ENCODE measurements at regions of chr1 and their contacts with region 1.

Region 1: GRCh38 chr1:152654110-152654509 is 9.1 kb upstream of the LCE2D start:
- DNase-seq: peak; percentile 49
- H3K4me3 ChIP-seq: no peak overlapping the region
- H3K27ac ChIP-seq: no peak overlapping the region
- H3K4me1 ChIP-seq: no peaks in the 10 kb centered on the region
- H3K27me3 ChIP-seq: no peaks in the 10 kb centered on the region
- CTCF ChIP-seq: peak; percentile 81
- EP300 ChIP-seq: no peak; a peak in 1 of 4 replicates
- RAD21 ChIP-seq: peak; percentile 61

Region 2: DNA sequence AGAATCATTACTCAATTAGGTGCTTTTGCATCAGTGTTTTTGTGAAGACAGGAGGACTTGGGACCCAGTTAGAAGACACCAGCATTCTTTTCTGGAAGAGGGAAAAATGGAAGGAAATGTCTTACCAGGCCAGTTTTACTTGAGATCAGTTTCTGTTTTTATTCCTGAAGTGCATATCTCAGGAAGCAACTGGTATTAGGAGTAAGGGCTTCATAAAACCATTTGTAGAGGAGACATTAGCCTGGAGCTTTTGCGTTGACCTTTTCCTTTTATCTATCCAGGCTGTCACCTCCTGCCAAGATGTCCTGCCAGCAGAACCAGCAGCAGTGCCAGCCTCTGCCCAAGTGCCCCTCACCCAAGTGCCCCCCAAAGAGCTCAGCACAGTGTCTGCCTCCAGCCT is 40.6 kb before region 1 on chr1 and contains the start of gene LCE3B:
- CTCF ChIA-PET with region 1: no interaction called
- POLR2A ChIA-PET with region 1: no interaction called
- DNase-seq: no peak
- H3K4me3 ChIP-seq: no peak within 1 kb of the TSS
- H3K27ac ChIP-seq: no peak within 1 kb of the TSS
- H3K4me1 ChIP-seq: no peaks in the 10 kb centered on the region
- H3K27me3 ChIP-seq: no peaks in the 10 kb centered on the region
- CTCF ChIP-seq: no peak
- EP300 ChIP-seq: no peak
- RAD21 ChIP-seq: no peak
- polyA plus RNA-seq, gene LCE3B: not detected in 2 replicates

Region 3: DNA sequence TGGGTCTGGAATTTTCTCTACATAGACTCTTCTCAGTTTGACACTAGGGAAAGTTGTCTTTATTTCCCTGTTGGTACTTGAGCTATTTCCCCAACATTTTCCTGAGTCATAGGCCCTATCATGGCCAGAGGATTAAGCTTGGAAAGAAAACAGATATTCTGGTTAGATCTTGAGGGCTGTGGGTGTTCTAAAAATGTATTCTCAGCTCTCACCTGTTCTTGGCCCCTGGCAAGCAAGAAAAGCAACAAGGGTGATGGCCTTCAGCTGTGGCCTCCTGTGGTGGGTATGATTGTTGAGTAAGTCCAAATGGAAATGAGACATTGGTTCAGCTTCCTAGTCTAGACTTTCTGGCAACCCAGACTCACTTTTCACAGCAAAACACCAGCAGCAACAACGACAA is 13.8 kb before region 1 on chr1:
- CTCF ChIA-PET with region 1: interaction called, 37 read pairs
- POLR2A ChIA-PET with region 1: no interaction called
- DNase-seq: no peak
- H3K4me3 ChIP-seq: no peak overlapping the region
- H3K27ac ChIP-seq: no peak overlapping the region
- H3K4me1 ChIP-seq: no peaks in the 10 kb centered on the region
- H3K27me3 ChIP-seq: no peaks in the 10 kb centered on the region
- CTCF ChIP-seq: no peak
- EP300 ChIP-seq: no peak
- RAD21 ChIP-seq: no peak

Region 4: GRCh38 chr1:152878042-152878441 is 223.9 kb after region 1 on chr1 and contains the start of gene SMCP:
- CTCF ChIA-PET with region 1: no interaction called
- POLR2A ChIA-PET with region 1: no interaction called
- DNase-seq: no peak
- H3K4me3 ChIP-seq: no peak within 1 kb of the TSS
- H3K27ac ChIP-seq: no peak within 1 kb of the TSS
- H3K4me1 ChIP-seq: no peaks in the 10 kb centered on the region; a peak in 1 of 4 replicates
- H3K27me3 ChIP-seq: no peaks in the 10 kb centered on the region
- CTCF ChIP-seq: peak; percentile 47
- EP300 ChIP-seq: no peak
- RAD21 ChIP-seq: no peak
- polyA plus RNA-seq, gene SMCP: not detected in 2 replicates

Measured in SK-N-SH (cell line).